GM13977 (cell line): ENCODE measurements at regions of chr3 and their contacts with region 1.

Region 1: GRCh38 chr3:150521463-150521862 is 24.8 kb downstream of the SERP1 start:
- DNase-seq: no peak
- CTCF ChIP-seq: no peak

Region 2: DNA sequence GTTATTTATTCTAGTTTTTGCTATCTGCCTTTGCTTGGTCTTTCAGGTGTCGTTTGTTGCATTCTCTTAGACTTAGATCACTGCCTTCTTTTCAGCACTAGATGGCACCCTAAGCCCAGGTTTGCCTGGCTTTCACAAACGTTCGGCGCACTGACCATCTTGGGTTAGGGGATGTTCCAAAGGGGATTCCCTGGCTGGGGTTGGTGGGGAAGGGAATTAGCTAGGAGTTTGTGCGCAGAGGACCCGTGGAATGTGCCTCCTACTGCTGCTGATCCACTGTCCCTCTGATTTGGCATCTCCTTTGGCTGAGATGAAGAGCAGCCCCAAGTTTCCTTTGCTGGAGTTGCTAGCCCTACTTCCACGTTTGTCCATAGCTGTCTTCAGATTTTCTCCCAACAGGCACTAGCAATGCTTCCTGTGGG is 584.6 kb before region 1 on chr3:
- in situ Hi-C with region 1: loop called (anchors 25 kb)
- DNase-seq: peak; percentile 31
- CTCF ChIP-seq: peak; percentile 76

Region 3: GRCh38 chr3:150699068-150699639 is 177.7 kb after region 1 on chr3:
- in situ Hi-C with region 1: no loop called
- DNase-seq: no peak
- CTCF ChIP-seq: no peak

Region 4: DNA sequence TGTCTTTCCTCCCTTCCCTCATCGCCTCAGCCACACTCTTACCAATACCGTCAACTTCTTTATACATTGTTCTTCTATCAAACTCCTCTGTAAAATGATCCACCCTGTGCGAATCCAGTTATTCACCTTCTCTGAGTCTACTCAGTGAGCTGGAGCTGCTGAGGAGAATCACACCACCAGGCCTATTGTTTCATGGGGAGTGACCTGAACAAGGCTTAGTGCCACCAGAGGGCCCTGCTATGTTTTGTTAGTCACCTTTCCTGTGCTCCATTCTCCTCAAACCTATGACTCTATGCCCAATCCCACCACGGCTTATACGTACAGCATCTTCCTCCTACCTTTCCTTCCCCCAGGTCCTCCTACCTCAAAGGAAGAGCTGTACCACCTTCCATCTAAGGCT is 513.6 kb after region 1 on chr3:
- in situ Hi-C with region 1: no loop called
- DNase-seq: no peak
- CTCF ChIP-seq: no peak